Activated CD4-positive, alpha-beta memory T cell treated with anti-CD3 and anti-CD28 coated beads, Interleukin-2, amount 10 ng/mL, durations not matched to agents 7 days and 5 days (primary cell): ENCODE measurements at regions of chr1 and their contacts with region 1.

Region 1: DNA sequence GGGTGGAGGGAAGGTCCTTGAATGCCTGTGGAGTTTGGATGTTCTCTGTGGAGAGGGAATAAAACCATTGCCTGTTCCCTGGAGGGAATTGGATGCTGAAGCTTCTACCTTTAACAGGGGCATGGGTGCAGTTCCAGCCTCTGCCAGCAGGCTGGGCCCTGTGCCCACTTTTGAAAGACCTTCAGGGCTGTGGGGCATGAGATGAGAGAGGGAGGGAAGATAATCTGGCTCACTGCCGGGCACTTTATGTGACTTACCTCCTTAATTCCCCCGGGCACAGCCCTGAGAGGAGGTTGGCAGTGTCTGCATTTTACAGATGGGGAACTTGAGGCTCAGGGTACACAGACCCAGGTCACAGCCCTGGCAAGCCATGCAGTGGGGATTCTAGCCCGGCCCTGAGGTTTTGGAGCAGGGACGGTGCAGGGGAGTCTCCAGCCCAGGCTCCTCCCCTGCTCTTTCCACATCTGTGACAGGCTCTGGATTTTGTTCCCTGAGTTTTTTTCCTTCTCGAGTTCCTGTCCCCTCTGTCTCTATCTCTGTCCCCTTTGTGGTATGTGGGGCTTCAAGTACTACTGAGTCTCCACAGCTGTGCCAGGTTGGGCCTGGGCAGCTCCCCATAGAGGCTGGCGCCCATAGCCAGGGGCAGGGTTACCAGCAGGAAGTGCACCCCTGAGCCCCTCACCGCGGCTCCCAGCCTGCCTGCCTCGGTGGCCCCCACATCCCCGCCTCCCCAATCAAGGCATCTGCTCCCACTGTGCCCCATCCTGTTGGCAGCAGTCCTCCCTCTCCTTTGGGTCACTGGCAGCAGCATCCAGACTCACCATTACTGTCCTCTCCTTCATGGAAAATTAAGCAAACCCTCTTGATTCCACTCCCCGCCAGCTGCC is 14.0 kb upstream of the THEMIS2 start:
- DNase-seq: peak; percentile 89
- H3K4me3 Mint-ChIP-seq: no peak overlapping the region
- H3K27ac Mint-ChIP-seq: no peak overlapping the region
- H3K4me1 Mint-ChIP-seq: peaks cover 21% of the 10 kb centered on the region
- H3K27me3 Mint-ChIP-seq: no peaks in the 10 kb centered on the region

Region 2: DNA sequence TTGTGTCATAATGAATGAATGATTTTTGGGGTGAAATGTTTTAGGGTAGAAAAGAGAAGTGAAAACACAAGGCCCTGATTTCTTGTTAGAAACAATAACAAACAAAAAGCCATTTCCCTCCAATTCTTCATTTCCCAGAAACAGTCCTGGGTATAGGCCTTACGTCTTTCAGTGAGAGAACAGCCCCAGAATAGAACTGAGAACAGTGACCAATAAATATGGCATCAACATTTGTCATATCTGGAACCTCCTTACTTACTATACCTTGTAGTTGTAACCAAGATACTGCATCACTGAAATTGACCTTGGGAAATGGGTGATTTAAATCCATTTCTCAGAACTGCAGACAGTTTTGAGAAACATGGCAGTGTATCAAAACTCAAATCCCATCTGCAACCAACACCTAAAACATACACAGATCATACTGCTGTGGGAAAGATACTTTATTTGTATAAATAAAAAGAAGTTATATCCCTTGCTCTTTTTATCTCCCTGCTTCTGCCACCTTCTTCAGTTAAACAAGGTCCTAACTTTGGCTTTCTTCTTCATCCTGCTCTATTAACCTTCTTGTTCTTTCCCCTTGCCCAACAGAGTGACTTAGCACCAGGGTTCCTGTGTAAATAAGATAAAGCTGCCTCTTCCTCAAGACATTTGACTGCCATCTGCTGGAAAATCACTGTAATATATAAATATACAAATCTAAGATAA is 121.0 kb after region 1 on chr1:
- CTCF ChIA-PET with region 1: interaction called, 22 read pairs
- POLR2A ChIA-PET with region 1: no interaction called
- DNase-seq: no peak
- H3K4me3 Mint-ChIP-seq: no peak overlapping the region
- H3K27ac Mint-ChIP-seq: no peak overlapping the region
- H3K4me1 Mint-ChIP-seq: peaks cover 5% of the 10 kb centered on the region
- H3K27me3 Mint-ChIP-seq: no peaks in the 10 kb centered on the region

Region 3: GRCh38 chr1:28208818-28209441 is 350.6 kb after region 1 on chr1:
- CTCF ChIA-PET with region 1: interaction called, 18 read pairs
- POLR2A ChIA-PET with region 1: no interaction called
- DNase-seq: peak; percentile 78
- H3K4me3 Mint-ChIP-seq: no peak overlapping the region
- H3K27ac Mint-ChIP-seq: no peak overlapping the region
- H3K4me1 Mint-ChIP-seq: peaks cover 4% of the 10 kb centered on the region
- H3K27me3 Mint-ChIP-seq: no peaks in the 10 kb centered on the region